H1 (cell line): ENCODE measurements at regions of chr7 and their contacts with region 1.

Region 1: DNA sequence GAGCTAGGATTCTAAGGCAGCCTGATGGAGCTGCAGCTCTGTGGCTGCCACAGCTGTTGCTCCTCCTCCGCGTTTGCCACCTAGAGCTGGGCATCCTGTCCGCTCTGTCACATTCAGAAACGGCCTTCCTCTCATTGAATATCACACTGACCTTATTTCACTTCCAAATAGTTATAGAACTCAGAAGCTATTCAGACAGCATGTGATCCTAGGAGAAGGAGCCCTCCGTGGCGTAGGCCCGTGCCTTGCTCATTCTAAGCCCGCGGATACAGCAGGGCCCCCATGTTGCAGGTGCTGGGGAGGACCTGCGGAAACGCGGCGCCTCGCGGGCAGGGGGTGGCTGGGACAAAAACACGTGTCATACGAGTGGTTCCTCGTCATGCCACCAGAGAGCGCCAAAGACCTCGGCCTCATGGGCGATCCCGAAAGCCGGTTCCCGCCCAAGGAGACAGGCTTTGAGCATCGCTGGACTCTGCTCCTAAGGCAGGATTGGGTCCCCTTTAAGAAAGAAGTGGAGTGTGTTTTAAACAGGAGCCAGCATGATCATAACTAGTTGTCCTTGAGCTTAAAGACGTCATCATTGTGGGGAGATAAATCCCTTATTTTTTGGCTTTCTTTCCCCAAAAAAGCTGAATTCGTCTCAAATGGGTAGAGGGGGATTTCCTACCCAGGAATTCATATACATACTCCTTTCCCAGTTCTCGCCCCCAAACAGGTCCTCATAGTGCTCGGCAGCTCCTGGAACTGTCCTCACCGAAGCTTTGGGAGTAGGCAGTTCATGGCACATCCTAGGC is 17.9 kb upstream of the FIGNL1 start:
- DNase-seq: peak; percentile 36 to 92
- H3K4me3 ChIP-seq: no peak overlapping the region
- H3K27ac ChIP-seq: no peak overlapping the region
- H3K4me1 ChIP-seq: no peaks in the 10 kb centered on the region; a peak in 1 of 7 replicates
- H3K27me3 ChIP-seq: peaks cover 0 to 14% (median 9%) of the 10 kb centered on the region in 4 experiments; a peak in 6 of 7 replicates
- CTCF ChIP-seq: peak; percentile 84 to 87 (median 87)
- EP300 ChIP-seq: no peak
- POLR2A ChIP-seq: no peak
- RAD21 ChIP-seq: peak; percentile 95 to 96

Region 2: DNA sequence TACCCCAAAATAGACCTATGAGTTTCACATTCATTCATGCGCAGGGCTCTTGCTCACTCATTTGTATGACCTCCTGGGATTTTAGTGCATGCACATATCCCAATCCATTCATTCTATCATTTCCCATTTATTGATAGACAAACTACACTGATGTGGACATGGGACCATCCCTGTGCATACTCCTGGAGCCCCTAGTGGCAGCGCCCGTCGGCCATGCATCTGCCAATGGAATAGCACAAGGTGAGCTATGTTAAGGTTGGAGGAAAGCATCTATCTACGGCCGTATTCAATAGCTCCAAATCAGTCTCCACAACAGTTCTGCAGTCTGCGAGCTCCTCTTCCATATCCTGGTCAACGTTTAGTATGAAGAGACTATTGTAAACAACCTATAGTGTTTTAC is 13.9 kb after region 1 on chr7:
- CTCF ChIA-PET with region 1: interaction called, 11 read pairs
- POLR2A ChIA-PET with region 1: no interaction called
- DNase-seq: no peak
- H3K4me3 ChIP-seq: no peak overlapping the region
- H3K27ac ChIP-seq: no peak overlapping the region
- H3K4me1 ChIP-seq: no peaks in the 10 kb centered on the region
- H3K27me3 ChIP-seq: no peaks in the 10 kb centered on the region
- CTCF ChIP-seq: peak in 2 of 3 experiments; percentile 33 to 37; a peak in 2 of 4 replicates
- EP300 ChIP-seq: no peak
- POLR2A ChIP-seq: no peak
- RAD21 ChIP-seq: no peak

Region 3: GRCh38 chr7:50560865-50561351 is 92.9 kb after region 1 on chr7:
- CTCF ChIA-PET with region 1: interaction called, 15 read pairs
- POLR2A ChIA-PET with region 1: no interaction called
- DNase-seq: no peak
- H3K4me3 ChIP-seq: no peak overlapping the region
- H3K27ac ChIP-seq: no peak overlapping the region
- H3K4me1 ChIP-seq: peaks cover 0 to 3% (median 0%) of the 10 kb centered on the region in 4 experiments; a peak in 3 of 7 replicates
- H3K27me3 ChIP-seq: no peaks in the 10 kb centered on the region
- CTCF ChIP-seq: peak in 1 of 3 experiments; percentile 14; a peak in 1 of 4 replicates
- EP300 ChIP-seq: no peak
- POLR2A ChIP-seq: no peak
- RAD21 ChIP-seq: no peak; a peak in 1 of 4 replicates

Region 4: DNA sequence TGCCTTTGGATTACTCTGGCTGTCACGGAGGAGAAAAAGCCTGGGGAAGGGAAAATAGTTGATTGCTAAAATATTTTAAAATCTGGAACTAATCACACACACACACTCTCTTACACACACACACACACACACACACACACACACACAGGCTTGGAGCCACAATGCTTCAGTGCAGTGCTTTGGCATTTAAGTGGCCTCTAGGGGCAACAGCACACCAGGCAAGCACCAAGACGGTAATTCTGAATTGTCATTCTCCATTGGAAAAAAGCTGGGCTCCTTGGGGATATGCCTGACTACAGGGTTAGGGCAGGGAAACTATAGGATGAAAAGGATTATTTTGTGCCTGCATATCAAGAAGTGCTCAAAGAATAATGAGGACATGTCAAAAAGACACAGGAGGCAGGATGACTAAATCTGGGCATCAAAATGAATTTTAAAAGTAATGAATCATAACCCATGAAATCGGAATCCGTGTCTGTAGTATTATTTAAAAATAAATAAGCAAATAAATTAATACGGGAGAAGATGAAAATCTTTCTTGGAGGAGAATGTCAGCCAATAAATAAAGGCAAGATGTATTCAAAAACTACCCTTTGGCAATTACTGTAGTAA is 127.6 kb after region 1 on chr7:
- CTCF ChIA-PET with region 1: interaction called, 11 read pairs
- POLR2A ChIA-PET with region 1: no interaction called
- DNase-seq: no peak
- H3K4me3 ChIP-seq: no peak overlapping the region
- H3K27ac ChIP-seq: no peak overlapping the region
- H3K4me1 ChIP-seq: no peaks in the 10 kb centered on the region; a peak in 1 of 7 replicates
- H3K27me3 ChIP-seq: no peaks in the 10 kb centered on the region
- CTCF ChIP-seq: peak; percentile 67 to 74 (median 67)
- EP300 ChIP-seq: no peak
- POLR2A ChIP-seq: no peak
- RAD21 ChIP-seq: peak; percentile 70 to 75

Region 5: GRCh38 chr7:50614721-50615518 is 146.9 kb after region 1 on chr7:
- CTCF ChIA-PET with region 1: interaction called, 14 read pairs
- POLR2A ChIA-PET with region 1: no interaction called
- DNase-seq: no peak
- H3K4me3 ChIP-seq: no peak overlapping the region
- H3K27ac ChIP-seq: no peak overlapping the region
- H3K4me1 ChIP-seq: no peaks in the 10 kb centered on the region
- H3K27me3 ChIP-seq: no peaks in the 10 kb centered on the region
- CTCF ChIP-seq: peak in 2 of 3 experiments; percentile 3 to 15; a peak in 1 of 4 replicates
- EP300 ChIP-seq: no peak
- POLR2A ChIP-seq: no peak
- RAD21 ChIP-seq: peak; percentile 9 to 34; a peak in 3 of 4 replicates

Region 6: DNA sequence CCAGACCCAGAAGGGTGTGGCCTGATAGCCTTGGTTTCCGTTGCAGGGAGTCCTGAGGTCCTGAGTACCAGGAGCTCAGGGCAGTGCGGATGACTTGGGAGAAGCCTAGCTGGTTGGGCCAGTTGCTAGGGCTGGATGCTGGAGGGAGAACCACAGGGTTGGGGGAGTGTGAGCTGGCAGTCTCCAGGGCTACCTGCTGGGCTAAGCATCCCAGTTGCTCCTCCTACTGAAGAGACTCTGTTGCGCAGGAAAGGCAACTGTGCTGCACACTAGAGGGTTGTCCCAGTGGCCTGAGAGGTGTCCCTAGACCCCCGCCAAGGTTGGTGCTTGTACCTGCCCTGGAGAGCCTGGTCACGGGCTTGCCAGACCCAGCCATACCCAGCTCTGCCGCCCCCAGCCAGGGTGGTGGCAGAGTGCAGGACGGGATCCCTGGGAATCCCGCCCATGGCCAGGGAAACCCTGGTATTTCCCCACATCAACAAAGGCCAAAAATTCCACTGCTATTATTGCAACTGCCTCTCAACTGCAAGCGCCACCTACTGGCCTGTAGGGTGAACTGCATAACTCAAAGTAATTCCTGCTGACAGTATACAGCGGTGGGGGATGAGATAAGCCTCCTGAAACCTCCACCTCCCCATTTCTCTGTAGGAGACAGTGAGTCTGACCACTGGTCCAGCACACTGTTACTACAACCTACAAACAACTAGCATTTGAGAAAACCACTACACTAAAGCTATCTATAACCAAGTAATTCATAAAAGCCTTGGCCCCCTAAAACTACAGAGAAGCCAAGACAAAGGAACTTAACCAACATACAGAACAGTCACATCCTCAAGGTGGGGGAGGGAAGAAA is 164.8 kb after region 1 on chr7:
- CTCF ChIA-PET with region 1: interaction called, 11 read pairs
- POLR2A ChIA-PET with region 1: no interaction called
- DNase-seq: peak; percentile 21 to 80
- H3K4me3 ChIP-seq: no peak overlapping the region
- H3K27ac ChIP-seq: peak overlapping the region; percentile 73
- H3K4me1 ChIP-seq: peaks cover 4 to 20% (median 9%) of the 10 kb centered on the region in 4 experiments
- H3K27me3 ChIP-seq: no peaks in the 10 kb centered on the region
- CTCF ChIP-seq: peak; percentile 48 to 93 (median 71)
- EP300 ChIP-seq: no peak
- POLR2A ChIP-seq: no peak
- RAD21 ChIP-seq: peak; percentile 49 to 61

Region 7: GRCh38 chr7:50679218-50680007 is 211.4 kb after region 1 on chr7:
- CTCF ChIA-PET with region 1: interaction called, 15 read pairs
- POLR2A ChIA-PET with region 1: no interaction called
- DNase-seq: no peak
- H3K4me3 ChIP-seq: no peak overlapping the region
- H3K27ac ChIP-seq: no peak overlapping the region
- H3K4me1 ChIP-seq: peaks cover 1 to 7% (median 3%) of the 10 kb centered on the region in 4 experiments; a peak in 5 of 7 replicates
- H3K27me3 ChIP-seq: no peaks in the 10 kb centered on the region
- CTCF ChIP-seq: peak in 2 of 3 experiments; percentile 14 to 34; a peak in 2 of 4 replicates
- EP300 ChIP-seq: no peak
- POLR2A ChIP-seq: no peak
- RAD21 ChIP-seq: peak; percentile 69